K562 (cell line): ENCODE measurements at regions of chr20 and their contacts with region 1.

Region 1: GRCh38 chr20:31595654-31596411 is 9.3 kb upstream of the ID1 start:
- DNase-seq: peak in 2 of 4 experiments; percentile 26 to 41
- ATAC-seq: peak; percentile 65
- H3K4me3 ChIP-seq: no peak overlapping the region
- H3K27ac ChIP-seq: peak overlapping the region; percentile 47
- H3K4me1 ChIP-seq: peaks cover 24 to 32% of the 10 kb centered on the region in 2 experiments
- H3K27me3 ChIP-seq: no peaks in the 10 kb centered on the region
- CTCF ChIP-seq: no peak
- EP300 ChIP-seq: no peak
- POLR2A ChIP-seq: no peak
- RAD21 ChIP-seq: no peak

Region 2: DNA sequence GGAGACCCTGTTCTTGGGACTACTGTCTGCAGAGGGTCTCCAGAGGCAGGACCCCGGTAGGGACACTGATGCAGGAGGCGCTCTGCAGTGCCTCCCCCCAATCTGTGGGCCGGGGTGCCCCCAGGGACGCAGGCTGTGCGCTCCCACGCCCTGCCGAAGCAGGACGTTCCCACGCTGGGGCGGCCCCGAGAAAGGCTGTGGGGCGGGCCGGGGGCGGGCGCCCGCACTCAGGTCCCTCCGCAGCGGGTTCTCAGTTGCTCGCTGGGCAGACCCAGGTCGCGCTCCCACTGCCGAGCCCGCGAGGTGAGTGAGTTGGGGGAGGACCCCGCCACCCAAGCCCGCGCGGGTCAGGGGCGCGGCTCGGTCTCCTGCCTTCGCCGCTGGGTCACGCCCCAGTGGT is 41.8 kb after region 1 on chr20 and contains the start of gene COX4I2:
- CTCF ChIA-PET with region 1: no interaction called
- POLR2A ChIA-PET with region 1: no interaction called
- in situ Hi-C with region 1: no loop called
- intact Hi-C with region 1: no loop called
- DNase-seq: peak in 1 of 4 experiments; percentile 9
- ATAC-seq: no peak
- H3K4me3 ChIP-seq: no peak within 1 kb of the TSS
- H3K27ac ChIP-seq: no peak within 1 kb of the TSS
- H3K4me1 ChIP-seq: peaks cover 8 to 22% of the 10 kb centered on the region in 2 experiments; a peak in 4 of 5 replicates
- H3K27me3 ChIP-seq: no peaks in the 10 kb centered on the region
- CTCF ChIP-seq: no peak
- EP300 ChIP-seq: no peak
- POLR2A ChIP-seq: no peak
- RAD21 ChIP-seq: no peak
- polyA plus RNA-seq, gene COX4I2: not detected

Region 3: DNA sequence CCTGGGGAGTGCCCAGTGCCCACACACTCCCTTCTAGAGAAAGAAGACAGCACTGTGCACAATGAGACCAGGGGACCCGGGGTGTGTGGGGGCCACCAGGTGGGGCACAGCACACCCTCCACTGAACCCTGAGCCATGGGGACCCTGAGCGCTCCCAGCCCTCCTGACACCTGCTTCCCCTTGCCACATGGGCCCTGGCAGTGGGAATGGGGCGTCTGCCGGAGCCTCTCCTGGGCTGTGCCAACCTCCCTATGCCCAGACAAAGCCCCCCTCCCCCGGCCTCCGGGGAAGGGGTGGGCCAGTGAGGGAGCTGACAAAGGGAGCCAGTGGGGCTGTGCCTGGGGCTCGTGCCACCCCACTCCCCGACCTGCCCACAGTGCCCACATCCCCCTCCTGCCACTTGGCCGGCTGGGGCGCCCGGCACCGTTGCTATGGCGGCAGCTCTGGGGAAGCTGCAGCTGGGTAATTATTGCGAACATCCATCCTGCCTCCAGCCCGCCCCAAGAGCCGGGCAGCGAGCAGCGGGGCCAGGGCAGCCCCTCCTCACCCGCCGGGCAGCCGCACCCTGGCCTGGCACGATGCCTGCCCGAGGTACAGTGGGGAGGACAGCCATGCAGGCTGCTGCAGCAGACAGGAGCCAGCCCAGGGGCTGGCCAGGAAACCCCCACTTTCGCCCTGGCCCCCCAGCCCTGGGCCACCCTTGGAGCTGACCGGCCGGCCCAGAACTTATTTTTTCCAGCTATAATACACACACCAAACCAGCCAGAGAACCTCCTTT is 1031.2 kb after region 1 on chr20:
- CTCF ChIA-PET with region 1: no interaction called
- POLR2A ChIA-PET with region 1: no interaction called
- in situ Hi-C with region 1: loop called (anchors 25 kb)
- intact Hi-C with region 1: no loop called
- DNase-seq: no peak
- ATAC-seq: peak; percentile 0; the same call in 2 of the 3 replicates
- H3K4me3 ChIP-seq: peak overlapping the region; percentile 20; the same call in 1 of the 2 replicates
- H3K27ac ChIP-seq: peak overlapping the region; percentile 84
- H3K4me1 ChIP-seq: peaks cover 59 to 83% of the 10 kb centered on the region in 2 experiments
- H3K27me3 ChIP-seq: no peaks in the 10 kb centered on the region
- CTCF ChIP-seq: no peak
- EP300 ChIP-seq: no peak
- POLR2A ChIP-seq: no peak
- RAD21 ChIP-seq: no peak